Kidney (tissue), 22 donors: ENCODE measurements at regions of chr13 and their contacts with region 1.

Region 1: GRCh38 chr13:72565893-72566292 is 161.5 kb downstream of the MZT1 start:
- DNase-seq: peak in 2 of 5 donors; percentile 57 to 77
- H3K4me3 ChIP-seq: no peak overlapping the region
- H3K27ac ChIP-seq: no peak overlapping the region
- H3K4me1 ChIP-seq: no peaks in the 10 kb centered on the region
- H3K27me3 ChIP-seq: no peaks in the 10 kb centered on the region
- CTCF ChIP-seq: peak; percentile 52

Region 2: DNA sequence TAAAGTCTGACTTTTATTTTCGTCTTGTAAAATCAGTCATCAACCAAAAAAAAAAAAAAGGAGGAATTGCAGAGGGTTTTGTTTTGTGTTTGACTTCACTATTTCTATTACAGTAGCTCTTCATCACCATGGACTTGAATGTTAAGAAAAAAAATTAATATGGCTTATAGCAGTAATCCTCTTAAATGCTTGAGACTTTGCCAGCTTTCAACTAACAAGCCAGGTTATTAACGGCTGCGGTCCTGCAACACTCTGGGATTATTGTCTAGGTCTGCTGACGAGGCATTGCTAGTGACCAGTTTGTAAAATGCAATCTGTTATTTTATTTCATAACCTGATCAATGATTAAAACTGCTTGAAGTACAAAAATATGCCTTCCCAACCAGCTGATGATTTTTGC is 1810.4 kb before region 1 on chr13:
- intact Hi-C with region 1: loop called (anchors 10 kb)
- DNase-seq: no peak
- H3K4me3 ChIP-seq: no peak overlapping the region
- H3K27ac ChIP-seq: no peak overlapping the region
- H3K4me1 ChIP-seq: no peaks in the 10 kb centered on the region
- H3K27me3 ChIP-seq: no peaks in the 10 kb centered on the region
- CTCF ChIP-seq: no peak

Region 3: GRCh38 chr13:72109863-72110262 is 456.0 kb before region 1 on chr13:
- intact Hi-C with region 1: no loop called
- DNase-seq: no peak
- H3K4me3 ChIP-seq: no peak overlapping the region
- H3K27ac ChIP-seq: no peak overlapping the region
- H3K4me1 ChIP-seq: no peaks in the 10 kb centered on the region
- H3K27me3 ChIP-seq: no peaks in the 10 kb centered on the region
- CTCF ChIP-seq: no peak

Region 4: DNA sequence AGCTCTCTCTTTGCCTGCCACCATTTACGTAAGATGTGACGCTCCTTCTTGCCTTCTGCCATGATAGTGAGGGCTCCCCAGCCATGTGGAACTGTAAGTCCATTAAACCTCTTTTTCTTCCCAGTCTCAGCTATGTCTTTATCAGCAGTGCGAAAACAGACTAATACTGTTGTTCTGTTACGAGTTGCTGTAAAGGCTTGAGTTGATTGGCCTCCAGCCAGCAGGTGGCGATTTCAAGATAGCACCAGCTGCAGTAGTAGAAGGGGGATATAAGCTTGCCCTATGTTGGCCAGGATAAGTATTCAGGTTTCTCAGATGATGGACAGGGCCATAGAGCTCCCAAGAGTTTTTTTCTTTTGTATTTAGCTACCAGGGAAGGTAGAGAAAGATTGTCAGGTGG is 224.0 kb before region 1 on chr13:
- intact Hi-C with region 1: no loop called
- DNase-seq: no peak
- H3K4me3 ChIP-seq: no peak overlapping the region
- H3K27ac ChIP-seq: no peak overlapping the region
- H3K4me1 ChIP-seq: no peaks in the 10 kb centered on the region
- H3K27me3 ChIP-seq: no peaks in the 10 kb centered on the region
- CTCF ChIP-seq: no peak

Region 5: DNA sequence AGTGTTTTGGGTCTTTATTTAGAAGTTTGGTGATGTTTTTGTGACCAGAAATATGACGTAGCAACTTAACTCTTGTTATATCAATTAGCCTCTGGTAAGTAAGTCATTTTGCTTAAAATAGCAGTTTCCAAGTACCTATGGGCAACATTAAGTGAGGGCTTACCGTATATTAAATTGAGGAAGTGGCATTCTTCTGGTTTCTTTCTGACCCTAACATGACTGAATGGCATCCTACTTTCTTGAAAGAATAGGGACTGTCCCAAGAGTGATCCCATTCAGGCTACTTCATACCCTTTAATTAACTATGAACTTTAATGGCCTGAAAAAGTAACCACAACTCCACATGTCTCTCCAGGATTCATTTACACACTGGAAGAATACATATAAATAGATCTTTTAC is 55.0 kb after region 1 on chr13:
- intact Hi-C with region 1: no loop called
- DNase-seq: no peak
- H3K4me3 ChIP-seq: no peak overlapping the region
- H3K27ac ChIP-seq: no peak overlapping the region
- H3K4me1 ChIP-seq: no peaks in the 10 kb centered on the region
- H3K27me3 ChIP-seq: no peaks in the 10 kb centered on the region
- CTCF ChIP-seq: no peak